Transverse colon (tissue), 4 donors: ENCODE measurements at regions of chr13 and their contacts with region 1.

Region 1: GRCh38 chr13:99516153-99516929 is 15.1 kb downstream of the TM9SF2 start:
- DNase-seq: no peak
- H3K4me3 ChIP-seq: no peak overlapping the region
- H3K27ac ChIP-seq: no peak overlapping the region
- H3K4me1 ChIP-seq: peaks cover 0 to 34% (median 3%) of the 10 kb centered on the region in 4 donors
- H3K27me3 ChIP-seq: no peaks in the 10 kb centered on the region
- CTCF ChIP-seq: no peak
- EP300 ChIP-seq: no peak
- POLR2A ChIP-seq: no peak

Region 2: GRCh38 chr13:99442273-99442895 is 74.0 kb before region 1 on chr13:
- in situ Hi-C with region 1: loop called in 1 of 4 experiments (anchors 10 kb)
- intact Hi-C with region 1: no loop called
- DNase-seq: peak; percentile 47
- H3K4me3 ChIP-seq: no peak overlapping the region
- H3K27ac ChIP-seq: no peak overlapping the region
- H3K4me1 ChIP-seq: no peaks in the 10 kb centered on the region
- H3K27me3 ChIP-seq: peaks cover 13% of the 10 kb centered on the region
- CTCF ChIP-seq: peak; percentile 93 to 99 (median 98)
- EP300 ChIP-seq: no peak
- POLR2A ChIP-seq: no peak

Region 3: GRCh38 chr13:99565478-99566124 is 49.3 kb after region 1 on chr13:
- in situ Hi-C with region 1: no loop called
- intact Hi-C with region 1: no loop called
- DNase-seq: no peak
- H3K4me3 ChIP-seq: no peak overlapping the region
- H3K27ac ChIP-seq: no peak overlapping the region
- H3K4me1 ChIP-seq: no peaks in the 10 kb centered on the region
- H3K27me3 ChIP-seq: no peaks in the 10 kb centered on the region
- CTCF ChIP-seq: no peak
- EP300 ChIP-seq: no peak
- POLR2A ChIP-seq: no peak

Region 4: GRCh38 chr13:100176801-100177400 is 660.6 kb after region 1 on chr13:
- in situ Hi-C with region 1: no loop called
- intact Hi-C with region 1: no loop called
- DNase-seq: no peak
- H3K4me3 ChIP-seq: no peak overlapping the region
- H3K27ac ChIP-seq: no peak overlapping the region
- H3K4me1 ChIP-seq: no peaks in the 10 kb centered on the region
- H3K27me3 ChIP-seq: no peaks in the 10 kb centered on the region
- CTCF ChIP-seq: no peak
- EP300 ChIP-seq: no peak
- POLR2A ChIP-seq: no peak